Caco-2 (cell line): ENCODE measurements at regions of chr19 and their contacts with region 1.

Region 1: GRCh38 chr19:55166530-55167268 is at the start of gene DNAAF3:
- DNase-seq: peak; percentile 98 to 99
- H3K4me3 ChIP-seq: peak within 1 kb of the TSS; percentile 73
- H3K4me3 Mint-ChIP-seq: peak within 1 kb of the TSS; percentile 79
- H3K27ac Mint-ChIP-seq: peak within 1 kb of the TSS; percentile 80
- H3K4me1 ChIP-seq: no peaks in the 10 kb centered on the region
- H3K4me1 Mint-ChIP-seq: no peaks in the 10 kb centered on the region
- H3K27me3 ChIP-seq: no peaks in the 10 kb centered on the region
- H3K27me3 Mint-ChIP-seq: peaks cover 15% of the 10 kb centered on the region
- CTCF ChIP-seq: no peak
- total RNA-seq, gene DNAAF3: 0.45 and 0.91 TPM in 2 replicates

Region 2: DNA sequence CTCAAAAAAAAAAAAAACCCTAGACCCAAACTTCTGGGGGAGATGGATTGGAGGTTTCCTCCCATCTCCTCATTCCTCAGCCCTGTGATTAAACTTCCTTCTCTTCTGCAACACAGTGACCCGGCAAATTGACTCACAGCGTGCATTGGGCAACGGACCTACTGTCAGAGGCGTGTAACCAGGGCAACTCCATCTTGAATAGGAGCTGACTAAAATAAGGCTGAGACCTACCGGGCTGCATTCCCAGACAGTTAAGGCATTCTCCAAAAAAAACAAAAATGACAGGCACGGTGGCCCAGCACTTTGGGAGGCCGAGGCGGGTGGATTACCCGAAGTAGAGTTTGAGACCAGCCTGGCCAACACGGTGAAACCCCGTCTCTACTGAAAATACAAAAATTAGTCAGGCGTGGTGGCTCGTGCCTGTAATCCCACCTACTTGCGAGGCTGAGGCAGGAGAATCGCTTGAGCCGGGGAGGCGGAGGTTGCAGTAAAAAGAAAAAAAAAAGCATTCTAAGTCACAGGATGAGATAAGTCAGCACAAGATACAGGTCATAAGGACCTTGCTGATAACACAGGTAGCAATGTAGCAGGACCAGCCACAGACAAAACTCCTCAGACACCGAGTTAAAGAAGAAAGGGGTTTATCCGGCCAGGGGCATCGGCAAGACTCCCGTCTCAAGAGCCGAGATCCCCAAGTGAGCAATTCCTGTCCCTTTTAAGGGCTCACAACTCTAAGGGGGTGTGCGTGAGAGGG is 213.9 kb before region 1 on chr19:
- CTCF ChIA-PET with region 1: no interaction called
- POLR2A ChIA-PET with region 1: no interaction called
- intact Hi-C with region 1: no loop called
- DNase-seq: peak; percentile 59 to 64
- H3K4me3 ChIP-seq: no peak overlapping the region
- H3K4me3 Mint-ChIP-seq: peak overlapping the region; percentile 63
- H3K27ac Mint-ChIP-seq: peak overlapping the region; percentile 86
- H3K4me1 ChIP-seq: peaks cover 30% of the 10 kb centered on the region
- H3K4me1 Mint-ChIP-seq: peaks cover 7% of the 10 kb centered on the region
- H3K27me3 ChIP-seq: no peaks in the 10 kb centered on the region
- H3K27me3 Mint-ChIP-seq: no peaks in the 10 kb centered on the region
- CTCF ChIP-seq: no peak

Region 3: GRCh38 chr19:55117636-55118391 is 48.9 kb before region 1 on chr19 and contains the start of gene PPP1R12C:
- CTCF ChIA-PET with region 1: interaction called, 7 read pairs
- POLR2A ChIA-PET with region 1: no interaction called
- intact Hi-C with region 1: loop called (anchors 2 kb)
- DNase-seq: peak; percentile 98 to 99
- H3K4me3 ChIP-seq: peak within 1 kb of the TSS; percentile 88
- H3K4me3 Mint-ChIP-seq: peak within 1 kb of the TSS; percentile 90
- H3K27ac Mint-ChIP-seq: peak within 1 kb of the TSS; percentile 82
- H3K4me1 ChIP-seq: peaks cover 17% of the 10 kb centered on the region; the same call in 1 of the 2 replicates
- H3K4me1 Mint-ChIP-seq: peaks cover 18% of the 10 kb centered on the region
- H3K27me3 ChIP-seq: no peaks in the 10 kb centered on the region
- H3K27me3 Mint-ChIP-seq: no peaks in the 10 kb centered on the region
- CTCF ChIP-seq: no peak
- total RNA-seq, gene PPP1R12C: 104 TPM in 2 replicates